PC-9 (cell line): ENCODE measurements at regions of chr6 and their contacts with region 1.

Region 1: DNA sequence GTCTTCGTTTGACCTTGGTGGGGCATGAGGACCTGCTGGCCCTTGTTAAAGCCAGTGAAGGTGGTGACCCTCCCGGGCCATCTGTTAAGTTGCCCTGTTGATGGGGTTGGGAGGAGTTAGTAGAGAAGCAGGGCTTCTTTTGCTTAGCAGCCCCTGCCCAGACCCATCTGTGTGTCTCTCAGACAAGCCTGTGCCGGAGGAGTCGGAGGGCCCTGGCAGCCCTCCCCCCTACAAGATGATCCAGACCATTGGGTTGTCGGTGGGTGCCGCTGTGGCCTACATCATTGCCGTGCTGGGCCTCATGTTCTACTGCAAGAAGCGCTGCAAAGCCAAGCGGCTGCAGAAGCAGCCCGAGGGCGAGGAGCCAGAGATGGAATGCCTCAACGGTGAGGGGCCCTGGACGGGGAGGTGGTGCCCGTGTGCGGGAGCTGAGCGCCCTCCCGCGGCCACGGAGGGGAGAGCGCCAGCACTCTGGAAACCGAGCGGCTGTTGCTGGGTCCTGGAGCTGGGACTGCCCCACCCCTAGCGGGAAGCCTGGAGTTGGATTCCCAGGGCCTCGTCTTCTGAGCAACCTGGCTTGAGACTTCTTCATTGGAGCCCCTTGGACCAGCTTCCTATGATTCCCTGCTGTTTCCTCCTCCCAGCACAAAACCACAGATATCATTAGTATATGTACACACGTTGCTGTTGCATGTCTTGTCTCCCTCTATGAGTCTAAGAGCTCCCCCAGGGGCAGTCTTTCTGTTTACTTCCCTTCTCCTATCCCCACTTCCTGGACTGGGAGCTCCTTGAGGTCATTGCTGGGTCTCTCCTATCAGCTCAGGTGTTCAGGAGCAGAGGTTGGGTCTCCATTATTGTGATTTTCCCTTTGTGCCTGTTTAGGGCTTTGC is 27.6 kb upstream of the SRF start:
- DNase-seq: peak; percentile 61 to 87
- H3K4me3 ChIP-seq: no peak overlapping the region
- H3K27ac ChIP-seq: no peak overlapping the region
- H3K4me1 ChIP-seq: no peaks in the 10 kb centered on the region
- H3K27me3 ChIP-seq: no peaks in the 10 kb centered on the region
- CTCF ChIP-seq: peak; percentile 94

Region 2: DNA sequence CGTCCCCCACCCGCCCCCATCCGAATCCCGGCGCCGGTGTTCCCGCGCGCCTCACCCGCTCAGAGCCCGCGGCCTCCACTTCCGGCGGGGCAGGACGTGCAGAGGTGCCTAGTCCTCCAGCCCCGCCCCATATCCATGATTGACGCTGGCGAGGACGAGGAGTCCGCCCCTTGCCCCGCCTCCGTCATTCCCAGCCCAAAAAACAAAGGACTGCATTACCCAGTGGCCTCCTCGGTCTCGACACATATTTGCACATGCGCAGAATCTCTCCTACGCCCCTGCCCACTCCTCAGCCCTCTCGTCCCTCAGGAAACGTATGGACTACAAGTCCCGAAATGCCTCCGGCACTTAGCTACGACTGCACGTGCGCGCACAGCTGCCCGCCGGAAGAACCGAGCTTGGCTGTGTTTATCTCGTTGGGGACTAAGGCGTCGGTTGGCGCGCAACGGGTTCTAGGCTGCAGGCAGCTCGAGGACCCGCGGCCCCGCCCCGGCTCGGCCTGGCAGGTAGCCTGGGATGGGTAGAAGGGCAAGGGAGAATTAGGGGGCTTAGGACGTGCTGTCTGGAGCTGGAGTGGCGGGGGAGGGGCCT is 129.5 kb before region 1 on chr6 and contains the starts of genes KLHDC3 and MEA1:
- CTCF ChIA-PET with region 1: no interaction called
- POLR2A ChIA-PET with region 1: no interaction called
- intact Hi-C with region 1: loop called (anchors 5 kb)
- DNase-seq: peak; percentile 99
- H3K4me3 ChIP-seq: peak within 1 kb of the TSS; percentile 67
- H3K27ac ChIP-seq: peak within 1 kb of the TSS; percentile 18; the same call in 1 of the 2 replicates
- H3K4me1 ChIP-seq: peaks cover 18% of the 10 kb centered on the region
- H3K27me3 ChIP-seq: no peaks in the 10 kb centered on the region
- CTCF ChIP-seq: no peak
- total RNA-seq, gene KLHDC3: 104 and 122 TPM in 2 replicates
- total RNA-seq, gene MEA1: 77.0 and 77.6 TPM in 2 replicates

Region 3: DNA sequence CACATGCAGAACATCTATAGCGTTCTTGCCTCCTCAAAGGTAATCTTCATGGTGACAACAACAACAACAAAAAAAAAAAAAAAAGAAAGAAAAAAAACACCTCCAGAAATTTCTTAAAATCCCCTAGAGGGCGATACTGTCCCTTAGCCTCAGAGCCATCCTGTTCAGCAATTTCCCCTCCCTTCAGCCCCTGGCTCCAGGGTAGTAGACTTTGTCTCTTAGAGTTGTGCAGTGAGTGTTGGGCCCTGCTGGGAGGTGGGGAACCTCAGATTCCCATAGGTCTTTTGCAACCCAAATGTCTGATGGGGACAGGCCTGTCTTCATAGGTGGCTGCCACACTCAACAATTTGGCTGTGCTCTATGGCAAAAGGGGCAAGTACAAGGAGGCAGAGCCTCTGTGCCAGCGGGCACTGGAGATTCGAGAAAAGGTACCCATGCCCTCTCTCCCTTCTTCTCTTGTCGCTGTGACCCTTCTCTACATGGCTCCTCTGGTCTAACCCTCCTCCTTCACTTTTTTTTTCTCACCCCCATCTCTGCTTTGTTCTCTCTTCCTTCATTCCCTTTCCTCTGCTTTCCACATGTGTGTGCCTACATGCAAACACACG is 73.3 kb before region 1 on chr6:
- CTCF ChIA-PET with region 1: no interaction called
- POLR2A ChIA-PET with region 1: no interaction called
- intact Hi-C with region 1: loop called (anchors 1 kb)
- DNase-seq: peak; percentile 23 to 48
- H3K4me3 ChIP-seq: no peak overlapping the region
- H3K27ac ChIP-seq: no peak overlapping the region
- H3K4me1 ChIP-seq: no peaks in the 10 kb centered on the region
- H3K27me3 ChIP-seq: no peaks in the 10 kb centered on the region
- CTCF ChIP-seq: peak; percentile 81

Region 4: GRCh38 chr6:43159599-43159998 is 16.1 kb after region 1 on chr6:
- CTCF ChIA-PET with region 1: interaction called, 13 read pairs
- POLR2A ChIA-PET with region 1: no interaction called
- intact Hi-C with region 1: no loop called
- DNase-seq: no peak
- H3K4me3 ChIP-seq: no peak overlapping the region
- H3K27ac ChIP-seq: no peak overlapping the region
- H3K4me1 ChIP-seq: no peaks in the 10 kb centered on the region
- H3K27me3 ChIP-seq: no peaks in the 10 kb centered on the region
- CTCF ChIP-seq: no peak